ENCODE measurements at regions of chr18 and their contacts with region 1.

Region 1: DNA sequence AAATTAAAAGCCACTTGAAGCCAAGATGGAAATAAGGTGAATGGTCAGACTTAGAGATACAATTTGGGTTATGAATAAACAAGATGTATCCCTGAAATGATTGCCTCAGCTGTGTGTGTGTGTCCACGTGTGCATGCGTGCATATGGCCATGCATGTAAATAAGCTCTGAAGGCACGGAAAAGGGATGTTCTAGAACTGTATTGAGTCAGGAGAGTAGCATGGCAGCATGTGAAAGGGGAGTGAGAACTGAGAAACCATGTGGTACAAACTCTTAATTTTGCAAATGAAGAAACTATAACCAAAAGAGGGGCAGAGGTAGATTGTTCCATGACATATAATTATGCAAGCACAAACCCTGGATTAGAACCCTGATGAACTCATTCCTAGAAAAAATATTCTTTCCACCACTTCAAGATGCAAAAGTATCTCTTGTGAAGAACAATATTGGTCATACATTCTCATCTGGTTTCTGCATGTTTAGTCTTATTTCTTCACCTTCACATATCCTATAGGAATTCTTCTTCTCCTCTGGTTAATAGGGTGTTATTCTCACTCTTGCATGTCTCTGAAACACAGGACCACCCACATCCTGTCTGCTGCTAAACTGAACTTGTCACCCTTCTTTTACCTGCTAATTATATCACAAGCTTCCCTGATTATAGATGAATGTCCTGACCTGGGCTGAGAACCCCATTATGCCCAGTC is 455.8 kb downstream of the SETBP1 start:
- DNase-seq: no peak
- H3K4me3 ChIP-seq: no peak overlapping the region
- H3K27ac ChIP-seq: no peak overlapping the region
- H3K4me1 ChIP-seq: no peaks in the 10 kb centered on the region
- H3K27me3 ChIP-seq: no peaks in the 10 kb centered on the region
- CTCF ChIP-seq: no peak
- EP300 ChIP-seq: no peak
- POLR2A ChIP-seq: no peak

Region 2: DNA sequence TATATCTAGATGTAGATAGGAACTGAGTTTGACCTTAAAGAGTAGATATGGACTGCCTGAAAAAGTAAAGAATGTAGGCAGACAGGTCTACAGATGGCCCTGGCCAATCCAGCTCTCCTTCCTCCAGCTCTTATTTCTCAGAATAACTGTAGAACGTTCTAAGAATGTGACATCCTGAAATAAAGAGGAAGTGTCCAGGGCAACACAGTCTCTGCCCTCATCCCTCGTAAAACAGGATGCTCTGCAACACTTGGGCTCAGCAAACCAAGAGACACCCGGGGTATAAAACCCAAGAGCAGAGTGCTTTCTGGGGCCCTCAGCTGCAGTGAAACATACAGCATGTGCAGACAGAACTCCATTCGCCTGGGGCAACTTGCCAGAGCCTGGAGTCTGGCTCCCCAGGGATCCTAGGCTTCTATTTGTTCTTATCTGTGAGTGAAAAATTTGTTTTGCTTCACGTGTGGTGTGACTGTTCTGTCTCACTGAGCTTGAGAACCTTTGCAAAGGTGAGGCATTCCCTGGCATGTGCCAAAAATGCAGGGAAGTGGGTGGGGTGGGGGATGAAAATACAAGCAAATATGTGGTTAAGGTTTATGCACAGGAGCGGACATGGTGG is 54.9 kb before region 1 on chr18:
- intact Hi-C with region 1: loop called (anchors 2 kb)
- DNase-seq: no peak
- H3K4me3 ChIP-seq: no peak overlapping the region
- H3K27ac ChIP-seq: no peak overlapping the region
- H3K4me1 ChIP-seq: no peaks in the 10 kb centered on the region
- H3K27me3 ChIP-seq: no peaks in the 10 kb centered on the region
- CTCF ChIP-seq: no peak
- EP300 ChIP-seq: no peak
- POLR2A ChIP-seq: no peak